ENCODE measurements at regions of chr1 and their contacts with region 1.

Region 1: DNA sequence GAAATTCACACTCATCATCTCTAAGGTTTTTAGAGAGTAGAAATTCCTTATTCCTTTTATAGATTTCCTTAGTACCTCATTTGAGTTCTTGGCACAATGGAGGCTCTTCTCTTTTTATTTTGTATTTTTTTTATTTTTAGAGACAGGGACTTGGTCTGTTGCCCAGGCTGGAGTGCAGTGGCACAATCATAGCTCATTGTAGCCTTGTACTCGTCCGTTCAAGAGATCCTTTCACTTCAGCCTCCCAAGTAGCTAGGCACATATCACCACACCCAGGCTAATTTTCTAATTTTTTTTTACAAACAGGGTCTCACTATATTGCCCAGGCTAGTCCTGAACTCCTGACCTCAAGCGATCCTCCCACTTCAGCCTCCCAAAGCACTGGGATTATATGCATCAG is 29.6 kb downstream of the RGL1 start:
- DNase-seq: peak in 1 of 2 donors; percentile 48
- ATAC-seq: no peak
- H3K4me3 ChIP-seq: no peak overlapping the region
- H3K27ac ChIP-seq: no peak overlapping the region
- H3K4me1 ChIP-seq: no peaks in the 10 kb centered on the region
- H3K27me3 ChIP-seq: no peaks in the 10 kb centered on the region
- CTCF ChIP-seq: no peak

Region 2: GRCh38 chr1:183881387-183882131 is 47.0 kb after region 1 on chr1:
- intact Hi-C with region 1: loop called in 1 of 2 experiments (anchors 5 kb)
- DNase-seq: peak; percentile 30 to 56
- ATAC-seq: peak in 3 of 4 donors; percentile 32 to 56 (median 54)
- H3K4me3 ChIP-seq: no peak overlapping the region
- H3K27ac ChIP-seq: peak overlapping the region; percentile 10
- H3K4me1 ChIP-seq: peaks cover 7% of the 10 kb centered on the region
- H3K27me3 ChIP-seq: no peaks in the 10 kb centered on the region
- CTCF ChIP-seq: no peak

Region 3: DNA sequence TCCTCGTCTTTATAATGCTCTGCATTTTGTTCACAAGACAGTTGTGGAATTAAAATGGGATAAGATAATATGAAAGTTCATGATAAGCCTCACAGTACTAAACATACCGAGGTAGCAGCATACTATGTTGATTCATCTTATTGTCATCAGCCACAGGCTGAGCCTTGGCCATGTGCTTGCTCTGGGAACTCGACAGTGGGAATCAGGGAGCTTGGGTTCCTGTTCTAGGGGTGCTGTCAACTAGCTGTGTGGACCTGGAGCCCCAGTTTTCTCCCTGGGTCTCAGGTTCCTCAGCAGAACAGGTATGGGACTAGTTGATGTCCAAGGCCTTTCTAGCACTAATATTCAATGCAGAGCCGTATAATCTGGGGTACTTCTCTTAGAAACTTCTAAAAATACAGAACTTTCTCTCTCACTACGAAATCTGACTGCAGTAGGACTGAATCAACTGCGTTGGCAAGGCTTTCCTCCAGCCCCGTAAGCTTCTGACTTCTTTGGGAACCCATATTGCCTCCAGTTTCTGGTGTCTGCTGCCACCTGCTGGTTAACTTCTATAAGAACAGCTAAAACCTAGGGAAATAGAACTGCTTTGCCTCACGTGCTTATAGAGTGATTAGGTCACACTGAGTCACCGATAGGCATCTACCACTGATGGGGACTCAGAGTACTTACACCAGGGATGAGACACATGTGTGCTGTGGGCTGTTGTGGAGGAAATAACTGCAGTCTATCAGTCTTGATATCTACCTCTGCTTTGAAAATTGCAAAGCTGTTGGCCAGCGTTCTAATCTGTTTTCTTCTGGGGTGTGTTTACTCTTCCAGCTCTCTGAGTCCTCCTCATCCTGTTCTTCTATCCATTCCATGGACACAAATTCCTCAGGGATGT is 81.3 kb after region 1 on chr1:
- intact Hi-C with region 1: no loop called
- DNase-seq: peak; percentile 66 to 71
- ATAC-seq: peak; percentile 83 to 97 (median 93)
- H3K4me3 ChIP-seq: peak overlapping the region; percentile 20
- H3K27ac ChIP-seq: no peak overlapping the region
- H3K4me1 ChIP-seq: peaks cover 6% of the 10 kb centered on the region
- H3K27me3 ChIP-seq: no peaks in the 10 kb centered on the region
- CTCF ChIP-seq: peak; percentile 91